Panc1 (cell line): ENCODE measurements at regions of chr22 and their contacts with region 1.

Region 1: GRCh38 chr22:17523925-17524324 is 39.4 kb upstream of the SLC25A18 start:
- DNase-seq: no peak
- ATAC-seq: no peak
- H3K4me3 ChIP-seq: no peak overlapping the region
- H3K27ac ChIP-seq: no peak overlapping the region
- H3K4me1 ChIP-seq: no peaks in the 10 kb centered on the region
- H3K27me3 ChIP-seq: no peaks in the 10 kb centered on the region
- CTCF ChIP-seq: no peak

Region 2: DNA sequence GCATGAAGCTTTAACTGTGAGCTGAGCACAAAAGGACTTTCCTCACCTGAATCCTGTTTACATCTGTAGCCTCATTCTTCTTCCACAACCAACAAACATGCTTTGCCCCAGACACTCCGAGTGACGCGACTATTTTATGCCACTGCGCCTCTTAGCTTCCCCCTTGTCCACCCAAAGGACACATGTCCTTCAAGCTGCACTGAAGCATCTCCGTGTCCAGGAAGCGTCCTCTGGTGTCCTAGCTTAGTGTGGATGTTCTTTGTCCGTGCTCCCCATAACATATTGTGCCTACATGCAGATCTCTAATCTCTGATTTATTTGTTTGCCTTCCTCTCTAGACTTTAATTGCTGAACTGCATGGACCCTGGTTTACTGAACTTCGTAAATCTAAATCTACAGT is 174.8 kb before region 1 on chr22:
- CTCF ChIA-PET with region 1: interaction called, 11 read pairs
- POLR2A ChIA-PET with region 1: no interaction called
- in situ Hi-C with region 1: no loop called
- intact Hi-C with region 1: no loop called
- DNase-seq: no peak
- ATAC-seq: no peak
- H3K4me3 ChIP-seq: peak overlapping the region; percentile 4 to 11; a peak in 3 of 4 replicates
- H3K27ac ChIP-seq: no peak overlapping the region
- H3K4me1 ChIP-seq: peaks cover 3% of the 10 kb centered on the region; the same call in 1 of the 2 replicates
- H3K27me3 ChIP-seq: no peaks in the 10 kb centered on the region
- CTCF ChIP-seq: no peak